ENCODE measurements at regions of chr1 and their contacts with region 1.

Region 1: GRCh38 chr1:59143133-59143487 is 153.8 kb upstream of the FGGY start:
- DNase-seq: no peak
- ATAC-seq: no peak

Region 2: GRCh38 chr1:58982259-58982998 is 160.7 kb before region 1 on chr1:
- intact Hi-C with region 1: loop called (anchors 2 kb)
- DNase-seq: peak; percentile 70
- ATAC-seq: peak; percentile 87

Region 3: GRCh38 chr1:59013276-59013927 is 129.7 kb before region 1 on chr1:
- intact Hi-C with region 1: no loop called
- DNase-seq: no peak
- ATAC-seq: peak; percentile 72